Right ventricle myocardium inferior (tissue), 1 donor: ENCODE measurements at regions of chr10 and their contacts with region 1.

Region 1: GRCh38 chr10:69479240-69480067 is 28.2 kb downstream of the TSPAN15 start:
- DNase-seq: peak; percentile 75
- ATAC-seq: peak; percentile 76

Region 2: GRCh38 chr10:69425511-69426298 is 53.7 kb before region 1 on chr10:
- intact Hi-C with region 1: no loop called
- DNase-seq: no peak
- ATAC-seq: no peak

Region 3: DNA sequence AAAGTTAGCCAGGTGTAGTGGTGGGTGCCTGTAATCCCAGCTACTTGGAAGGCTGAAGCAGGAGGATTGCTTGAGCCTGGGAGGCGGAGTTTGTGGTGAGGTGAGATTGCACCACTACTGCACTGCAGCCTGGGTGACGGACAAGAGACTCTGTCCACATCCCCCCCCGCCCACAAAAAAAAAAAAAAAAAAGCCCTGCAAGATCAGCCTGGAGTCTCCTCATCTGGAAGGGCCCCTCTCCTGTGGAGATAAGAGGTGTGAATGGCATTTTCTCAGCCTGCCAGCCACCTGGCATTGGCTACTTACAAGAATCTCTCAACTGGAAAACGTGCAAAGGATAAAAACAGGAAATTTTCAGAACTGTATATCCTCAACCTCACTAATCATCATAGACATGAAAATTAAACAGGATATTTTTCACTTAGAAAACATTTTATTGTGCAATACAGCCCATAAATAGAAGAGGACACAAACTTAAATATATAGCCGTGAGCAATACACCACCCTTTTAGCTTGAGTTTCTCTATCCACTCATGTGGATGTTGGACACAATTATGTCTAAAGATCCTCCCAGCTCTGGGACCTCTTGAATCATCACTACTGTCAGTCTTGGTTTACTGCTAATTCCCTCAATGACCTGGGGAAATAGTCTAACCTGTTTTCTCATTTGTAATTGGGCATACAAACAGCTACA is 39.5 kb before region 1 on chr10:
- intact Hi-C with region 1: loop called (anchors 5 kb)
- DNase-seq: no peak
- ATAC-seq: no peak

Region 4: GRCh38 chr10:69742928-69743602 is 263.6 kb after region 1 on chr10:
- intact Hi-C with region 1: no loop called
- DNase-seq: no peak
- ATAC-seq: peak; percentile 23